ENCODE measurements at regions of chr17 and their contacts with region 1.

Region 1: DNA sequence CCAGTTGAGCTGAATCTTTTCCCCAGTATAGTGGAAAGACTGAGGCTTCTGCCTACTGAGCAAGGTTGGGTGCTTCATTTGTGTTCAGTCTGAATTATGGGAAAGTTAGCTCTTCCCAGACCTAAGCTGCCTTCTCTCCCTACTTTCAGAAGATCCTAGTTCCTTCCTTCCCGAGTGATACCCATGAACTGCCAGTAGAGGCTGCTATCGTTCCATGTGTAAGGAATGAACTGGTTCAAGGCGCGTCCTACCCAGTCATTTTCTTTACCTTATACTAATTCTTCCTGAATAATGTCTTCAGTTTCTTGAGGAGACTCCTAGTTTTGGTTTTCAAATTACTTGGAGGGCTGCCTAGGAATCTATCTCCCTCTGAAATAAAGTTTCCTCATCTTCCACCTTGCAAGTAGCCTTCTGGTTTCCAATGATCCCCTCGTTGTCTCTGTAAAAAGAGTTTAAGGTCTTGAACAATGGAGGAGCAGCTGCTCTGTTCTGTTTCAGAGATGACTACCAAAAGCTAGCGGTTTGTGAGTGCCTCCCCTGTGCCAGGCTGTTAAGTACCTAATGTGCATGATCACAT is 934 bp upstream of the AOC2 start:
- DNase-seq: no peak
- ATAC-seq: peak; percentile 62 to 74
- H3K4me3 ChIP-seq: no peak overlapping the region
- H3K27ac ChIP-seq: no peak overlapping the region
- H3K4me1 ChIP-seq: peaks cover 42% of the 10 kb centered on the region
- H3K27me3 ChIP-seq: no peaks in the 10 kb centered on the region
- CTCF ChIP-seq: peak; percentile 87

Region 2: GRCh38 chr17:42906772-42907446 is 63.5 kb after region 1 on chr17:
- intact Hi-C with region 1: no loop called
- DNase-seq: no peak
- ATAC-seq: no peak
- H3K4me3 ChIP-seq: no peak overlapping the region
- H3K27ac ChIP-seq: no peak overlapping the region
- H3K4me1 ChIP-seq: no peaks in the 10 kb centered on the region
- H3K27me3 ChIP-seq: no peaks in the 10 kb centered on the region
- CTCF ChIP-seq: no peak

Region 3: GRCh38 chr17:42937712-42938596 is 94.5 kb after region 1 on chr17:
- intact Hi-C with region 1: loop called (anchors 10 kb)
- DNase-seq: no peak
- ATAC-seq: peak; percentile 69 to 77
- H3K4me3 ChIP-seq: no peak overlapping the region
- H3K27ac ChIP-seq: no peak overlapping the region
- H3K4me1 ChIP-seq: no peaks in the 10 kb centered on the region
- H3K27me3 ChIP-seq: no peaks in the 10 kb centered on the region
- CTCF ChIP-seq: peak; percentile 64

Measured in lower lobe of right lung (tissue), 2 donors.